Activated CD4-positive, alpha-beta memory T cell treated with anti-CD3 and anti-CD28 coated beads, Interleukin-2, amount 10 ng/mL, durations not matched to agents 7 days and 5 days (primary cell): ENCODE measurements at regions of chr17 and their contacts with region 1.

Region 1: DNA sequence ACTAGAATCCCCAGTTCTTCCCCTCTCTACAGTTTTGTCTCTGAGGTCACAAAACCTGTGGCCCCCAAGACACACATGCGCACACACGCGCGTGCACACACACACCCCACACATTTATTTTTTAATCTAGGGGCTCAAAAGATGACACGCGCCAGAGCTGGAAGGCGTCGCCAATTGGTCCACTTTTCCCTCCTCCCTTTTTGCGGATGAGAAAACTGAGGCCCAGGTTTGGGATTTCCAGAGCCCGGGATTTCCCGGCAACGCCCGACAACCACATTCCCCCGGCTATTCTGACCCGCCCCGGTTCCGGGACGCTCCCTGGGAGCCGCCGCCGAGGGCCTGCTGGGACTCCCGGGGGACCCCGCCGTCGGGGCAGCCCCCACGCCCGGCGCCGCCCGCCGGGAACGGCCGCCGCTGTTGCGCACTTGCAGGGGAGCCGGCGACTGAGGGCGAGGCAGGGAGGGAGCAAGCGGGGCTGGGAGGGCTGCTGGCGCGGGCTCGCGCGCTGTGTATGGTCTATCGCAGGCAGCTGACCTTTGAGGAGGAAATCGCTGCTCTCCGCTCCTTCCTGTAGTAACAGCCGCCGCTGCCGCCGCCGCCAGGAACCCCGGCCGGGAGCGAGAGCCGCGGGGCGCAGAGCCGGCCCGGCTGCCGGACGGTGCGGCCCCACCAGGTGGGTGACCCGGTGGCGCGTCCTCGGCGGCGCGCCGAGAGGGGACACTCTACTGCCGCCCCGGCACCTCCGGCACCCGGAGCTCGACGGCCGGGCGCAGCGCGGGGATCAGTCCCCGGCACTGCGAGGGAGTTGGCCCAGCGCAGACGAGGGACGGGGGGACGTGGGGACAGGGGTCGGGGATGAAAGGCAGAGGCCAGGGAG is at the start of gene STAT5A:
- DNase-seq: peak; percentile 86
- H3K4me3 Mint-ChIP-seq: peak within 1 kb of the TSS; percentile 89
- H3K27ac Mint-ChIP-seq: peak within 1 kb of the TSS; percentile 86
- H3K4me1 Mint-ChIP-seq: peaks cover 59% of the 10 kb centered on the region
- H3K27me3 Mint-ChIP-seq: no peaks in the 10 kb centered on the region
- total RNA-seq, gene STAT5A: 88.4 to 96.7 TPM

Region 2: GRCh38 chr17:42276359-42276608 is 11.9 kb before region 1 on chr17 and contains the start of gene STAT5B:
- CTCF ChIA-PET with region 1: interaction called, 3 read pairs
- POLR2A ChIA-PET with region 1: interaction called, 193 read pairs
- DNase-seq: peak; percentile 79
- H3K4me3 Mint-ChIP-seq: peak within 1 kb of the TSS; percentile 88
- H3K27ac Mint-ChIP-seq: peak within 1 kb of the TSS; percentile 83
- H3K4me1 Mint-ChIP-seq: peaks cover 41% of the 10 kb centered on the region
- H3K27me3 Mint-ChIP-seq: no peaks in the 10 kb centered on the region
- total RNA-seq, gene STAT5B: 163 to 171 TPM

Region 3: GRCh38 chr17:42312285-42313130 is 24.3 kb after region 1 on chr17:
- CTCF ChIA-PET with region 1: interaction called, 3 read pairs
- POLR2A ChIA-PET with region 1: interaction called, 19 read pairs
- DNase-seq: peak; percentile 80
- H3K4me3 Mint-ChIP-seq: no peak overlapping the region
- H3K27ac Mint-ChIP-seq: peak overlapping the region; percentile 6
- H3K4me1 Mint-ChIP-seq: peaks cover 59% of the 10 kb centered on the region
- H3K27me3 Mint-ChIP-seq: no peaks in the 10 kb centered on the region